Ascending aorta (tissue), 2 donors: ENCODE measurements at regions of chr13 and their contacts with region 1.

Region 1: DNA sequence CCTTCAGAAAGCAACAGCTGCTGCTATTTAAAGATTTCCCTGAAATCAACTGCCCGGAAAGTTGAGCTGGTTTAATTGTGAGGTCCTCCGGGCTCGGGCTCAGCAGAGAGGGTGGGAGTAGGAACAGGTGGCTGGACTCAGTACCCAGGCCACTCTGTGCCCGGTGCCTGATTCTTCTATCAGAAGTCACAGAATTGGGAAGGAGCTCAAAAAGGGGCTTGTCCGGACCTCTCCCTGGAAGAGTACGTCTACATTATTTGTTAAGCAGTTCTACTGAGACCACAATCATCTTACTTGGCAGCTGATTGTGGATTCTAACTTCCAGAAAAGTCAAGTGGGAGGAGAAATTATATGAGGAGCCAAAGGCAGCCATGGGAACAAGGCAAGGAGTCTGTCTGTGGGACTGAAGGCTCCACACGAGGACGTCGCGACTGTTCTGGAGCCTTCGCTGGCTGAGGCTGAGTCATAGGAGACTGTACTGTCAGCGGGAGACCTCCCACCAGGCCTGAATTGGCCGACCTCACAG is 91.7 kb upstream of the ANKRD10 start:
- DNase-seq: peak; percentile 73 to 92
- H3K4me3 ChIP-seq: peak overlapping the region; percentile 18 to 21
- H3K27ac ChIP-seq: peak overlapping the region; percentile 84 to 86
- H3K4me1 ChIP-seq: peaks cover 0 to 16% of the 10 kb centered on the region in 2 donors
- H3K27me3 ChIP-seq: no peaks in the 10 kb centered on the region
- CTCF ChIP-seq: no peak

Region 2: DNA sequence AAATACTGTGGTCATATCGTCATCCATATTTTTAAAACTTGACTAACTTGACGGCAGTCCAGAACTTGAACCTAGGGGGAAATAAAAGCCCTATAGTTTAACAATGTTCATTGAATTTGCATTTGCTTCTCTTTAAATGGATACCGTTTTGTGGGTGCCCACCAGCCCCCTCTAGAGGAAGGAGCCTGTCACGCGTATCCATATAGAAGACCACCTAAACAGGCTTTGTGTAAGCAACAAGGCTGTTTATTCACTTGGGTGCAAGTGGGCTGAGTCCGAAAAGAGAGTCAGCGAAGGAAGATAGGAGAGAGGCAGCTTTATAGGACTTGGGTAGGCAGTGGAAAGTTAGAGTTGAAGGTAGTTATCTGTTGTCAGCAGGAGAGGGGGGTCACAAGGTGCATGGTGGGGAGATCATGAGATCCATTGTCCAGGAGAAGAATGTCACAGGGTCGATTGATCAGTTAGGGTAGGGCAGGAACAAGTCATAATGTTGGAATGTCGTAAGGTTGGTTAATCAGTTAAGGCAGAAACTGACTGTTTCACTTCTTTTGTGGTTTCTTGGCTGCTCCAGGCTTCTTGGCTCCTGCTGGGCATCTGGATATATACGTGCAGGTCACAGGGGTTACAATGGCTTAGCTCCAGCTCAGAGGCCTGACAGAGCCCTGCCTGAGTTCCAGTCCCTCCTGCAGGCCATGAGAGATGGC is 49.2 kb before region 1 on chr13:
- intact Hi-C with region 1: loop called (anchors 5 kb)
- DNase-seq: no peak
- H3K4me3 ChIP-seq: no peak overlapping the region
- H3K27ac ChIP-seq: no peak overlapping the region
- H3K4me1 ChIP-seq: peaks cover 0 to 5% of the 10 kb centered on the region in 2 donors
- H3K27me3 ChIP-seq: no peaks in the 10 kb centered on the region
- CTCF ChIP-seq: no peak

Region 3: GRCh38 chr13:111228262-111229144 is 221.9 kb after region 1 on chr13:
- intact Hi-C with region 1: loop called (anchors 5 kb)
- DNase-seq: peak; percentile 24 to 92
- H3K4me3 ChIP-seq: peak overlapping the region in 1 of 2 donors; percentile 18
- H3K27ac ChIP-seq: peak overlapping the region; percentile 50 to 56
- H3K4me1 ChIP-seq: peaks cover 2 to 25% of the 10 kb centered on the region in 2 donors
- H3K27me3 ChIP-seq: no peaks in the 10 kb centered on the region
- CTCF ChIP-seq: no peak